ENCODE measurements at regions of chr1 and their contacts with region 1.

Region 1: GRCh38 chr1:205354259-205354904 is 2.3 kb downstream of the KLHDC8A start:
- DNase-seq: peak; percentile 79
- ATAC-seq: peak; percentile 51
- H3K4me3 Mint-ChIP-seq: no peak overlapping the region
- H3K27ac Mint-ChIP-seq: no peak overlapping the region
- H3K4me1 Mint-ChIP-seq: no peaks in the 10 kb centered on the region
- H3K27me3 Mint-ChIP-seq: peaks cover 21% of the 10 kb centered on the region

Region 2: GRCh38 chr1:205306929-205307566 is 47.3 kb before region 1 on chr1:
- CTCF ChIA-PET with region 1: no interaction called
- POLR2A ChIA-PET with region 1: no interaction called
- DNase-seq: no peak
- ATAC-seq: no peak
- H3K4me3 Mint-ChIP-seq: no peak overlapping the region
- H3K27ac Mint-ChIP-seq: no peak overlapping the region
- H3K4me1 Mint-ChIP-seq: peaks cover 8% of the 10 kb centered on the region
- H3K27me3 Mint-ChIP-seq: no peaks in the 10 kb centered on the region

Region 3: DNA sequence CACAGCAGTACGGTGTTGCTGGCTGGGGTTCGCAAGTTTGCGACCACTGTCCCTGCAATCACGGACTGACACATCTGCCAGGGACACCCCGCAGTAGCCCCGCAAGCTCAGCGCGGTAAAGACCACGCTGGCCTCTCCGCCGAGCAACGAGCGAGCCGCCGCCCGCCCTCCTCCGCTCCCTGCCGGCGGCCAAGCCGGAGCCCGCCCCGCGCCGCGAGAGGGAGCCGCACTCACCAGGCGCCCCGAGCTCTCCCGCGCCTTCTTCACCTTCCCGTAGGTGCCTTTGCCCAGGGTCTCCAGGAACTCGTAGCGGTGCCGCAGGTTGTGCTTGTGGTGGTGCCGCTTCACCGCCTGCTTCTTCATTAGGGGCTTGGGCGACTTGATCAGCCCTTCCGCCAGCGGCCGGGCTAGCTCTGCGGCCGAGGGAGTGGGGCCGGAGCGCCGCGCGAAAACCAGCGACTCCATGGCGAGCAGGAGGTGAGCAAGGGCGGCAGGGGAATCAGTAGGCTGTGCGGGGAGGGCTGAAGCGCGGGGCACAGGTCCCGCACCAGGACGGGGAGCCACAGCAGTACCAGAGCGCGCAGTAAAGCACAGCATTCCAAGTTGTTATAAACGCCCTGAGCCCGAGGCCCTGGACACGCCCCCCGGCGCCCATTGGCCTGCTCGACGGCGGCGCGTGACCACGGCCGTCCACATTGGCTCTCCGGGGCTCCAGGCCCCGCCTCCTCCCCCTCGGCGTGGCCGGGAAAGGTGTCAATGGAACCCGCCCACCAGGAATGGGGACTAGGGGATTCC is 33.0 kb before region 1 on chr1 and contains the start of gene NUAK2:
- CTCF ChIA-PET with region 1: interaction called, 14 read pairs
- POLR2A ChIA-PET with region 1: no interaction called
- DNase-seq: peak; percentile 69
- ATAC-seq: peak; percentile 79
- H3K4me3 Mint-ChIP-seq: peak within 1 kb of the TSS; percentile 87
- H3K27ac Mint-ChIP-seq: peak within 1 kb of the TSS; percentile 56
- H3K4me1 Mint-ChIP-seq: peaks cover 52% of the 10 kb centered on the region
- H3K27me3 Mint-ChIP-seq: peaks cover 36% of the 10 kb centered on the region
- total RNA-seq, gene NUAK2: 1.6 TPM

Region 4: GRCh38 chr1:205365945-205366463 is 11.6 kb after region 1 on chr1:
- CTCF ChIA-PET with region 1: interaction called, 12 read pairs
- POLR2A ChIA-PET with region 1: no interaction called
- DNase-seq: no peak
- ATAC-seq: no peak
- H3K4me3 Mint-ChIP-seq: no peak overlapping the region
- H3K27ac Mint-ChIP-seq: no peak overlapping the region
- H3K4me1 Mint-ChIP-seq: no peaks in the 10 kb centered on the region
- H3K27me3 Mint-ChIP-seq: peaks cover 15% of the 10 kb centered on the region

Region 5: DNA sequence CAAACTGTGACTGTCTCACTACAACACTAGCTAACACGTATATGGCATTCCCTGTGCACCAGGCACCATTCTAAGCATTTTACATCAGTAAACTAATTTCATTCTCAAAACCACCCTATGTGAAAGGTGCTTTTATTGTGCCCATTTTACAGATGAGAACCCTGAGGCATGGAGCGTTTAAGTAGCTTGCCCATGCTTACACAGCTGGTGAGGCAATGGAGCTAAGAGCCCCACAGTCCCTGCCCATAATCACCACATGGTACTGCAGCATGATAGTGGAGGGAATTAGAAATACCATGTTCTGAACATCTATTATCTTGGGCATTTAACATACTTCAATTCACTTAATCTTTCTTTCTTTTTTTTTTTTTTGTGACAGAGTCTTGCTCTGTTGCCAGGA is 33.5 kb after region 1 on chr1:
- CTCF ChIA-PET with region 1: interaction called, 12 read pairs
- POLR2A ChIA-PET with region 1: no interaction called
- DNase-seq: no peak
- ATAC-seq: no peak
- H3K4me3 Mint-ChIP-seq: no peak overlapping the region
- H3K27ac Mint-ChIP-seq: no peak overlapping the region
- H3K4me1 Mint-ChIP-seq: no peaks in the 10 kb centered on the region
- H3K27me3 Mint-ChIP-seq: peaks cover 8% of the 10 kb centered on the region

Region 6: DNA sequence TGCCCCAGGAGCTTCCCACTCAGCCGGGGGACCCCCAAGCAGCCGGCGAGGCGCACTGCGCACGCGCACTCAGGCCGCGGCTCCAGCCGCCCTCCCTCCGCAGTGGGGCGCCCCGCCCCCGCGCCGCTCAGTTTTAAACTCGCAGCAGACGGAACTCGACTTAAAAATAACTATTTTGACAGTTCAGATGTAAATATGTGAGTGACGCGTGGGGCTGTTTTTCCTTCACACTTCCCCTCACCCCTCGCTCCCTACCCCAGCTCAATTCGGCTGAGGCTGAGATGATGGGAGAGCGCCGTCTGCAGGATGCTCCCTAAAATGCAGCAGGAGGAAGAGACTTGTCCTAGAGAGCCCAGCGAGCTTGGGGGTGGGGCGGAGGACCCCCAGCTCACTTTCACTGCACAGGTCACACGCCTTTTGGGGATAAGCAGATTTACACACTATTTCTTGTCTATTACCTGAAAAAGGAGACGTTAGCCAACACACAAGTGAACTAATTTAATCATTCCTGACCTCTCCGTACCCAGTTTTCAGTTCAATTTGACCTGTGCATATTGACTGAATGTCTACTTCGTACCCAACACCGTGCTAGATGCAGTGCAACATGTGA is 76.4 kb after region 1 on chr1:
- CTCF ChIA-PET with region 1: interaction called, 10 read pairs
- POLR2A ChIA-PET with region 1: no interaction called
- DNase-seq: peak; percentile 64
- ATAC-seq: peak; percentile 75
- H3K4me3 Mint-ChIP-seq: peak overlapping the region; percentile 74
- H3K27ac Mint-ChIP-seq: peak overlapping the region; percentile 32
- H3K4me1 Mint-ChIP-seq: peaks cover 11% of the 10 kb centered on the region
- H3K27me3 Mint-ChIP-seq: peaks cover 25% of the 10 kb centered on the region